Activated CD4-positive, alpha-beta T cell treated with anti-CD3 and anti-CD28 coated beads for 36 hours (primary cell): ENCODE measurements at regions of chr3 and their contacts with region 1.

Region 1: DNA sequence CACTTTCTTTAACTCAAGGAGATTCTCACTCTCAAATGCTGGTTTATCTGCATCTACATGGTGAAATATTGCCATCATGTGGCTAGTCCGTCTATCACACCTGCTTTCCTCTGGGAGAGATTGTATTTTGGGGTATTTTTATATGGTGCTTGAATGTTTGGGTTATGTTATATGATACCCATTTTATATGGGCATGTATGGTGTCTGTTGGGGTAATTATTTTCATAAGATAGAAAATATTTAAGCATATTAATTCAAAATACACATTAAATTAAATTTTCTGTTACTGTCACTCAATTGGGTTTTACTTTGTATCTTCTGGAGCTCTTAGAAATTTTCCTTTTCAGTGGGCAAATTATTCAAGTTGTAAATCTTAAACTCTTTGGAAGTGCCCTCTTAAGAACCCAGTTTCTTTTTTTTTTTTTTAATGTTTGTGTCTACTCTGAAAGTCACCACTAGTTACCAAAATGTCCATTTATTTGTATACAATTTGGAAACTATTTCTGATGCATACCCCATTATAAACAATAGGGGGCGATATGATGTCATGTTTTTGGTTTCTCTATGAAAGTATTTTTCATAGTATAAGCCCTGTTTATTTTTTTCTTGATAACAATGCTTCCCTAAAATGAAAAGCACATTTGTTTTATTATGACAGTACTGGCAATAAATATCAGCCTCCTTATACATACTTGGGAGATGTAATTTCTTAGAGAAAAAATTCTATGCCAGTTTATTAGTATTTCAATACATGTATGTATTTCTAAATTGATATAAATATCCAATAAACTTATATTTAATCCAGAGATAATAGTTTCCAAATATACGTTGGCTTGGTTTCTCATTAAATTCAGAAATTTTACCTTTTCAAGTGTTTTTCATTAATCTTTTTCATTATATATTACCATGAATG is 36.1 kb upstream of the PLSCR5 start:
- DNase-seq: peak; percentile 22
- ATAC-seq: peak; percentile 49
- H3K4me3 Mint-ChIP-seq: no peak overlapping the region
- H3K27ac Mint-ChIP-seq: no peak overlapping the region
- H3K4me1 Mint-ChIP-seq: no peaks in the 10 kb centered on the region
- H3K27me3 Mint-ChIP-seq: peaks cover 10% of the 10 kb centered on the region

Region 2: DNA sequence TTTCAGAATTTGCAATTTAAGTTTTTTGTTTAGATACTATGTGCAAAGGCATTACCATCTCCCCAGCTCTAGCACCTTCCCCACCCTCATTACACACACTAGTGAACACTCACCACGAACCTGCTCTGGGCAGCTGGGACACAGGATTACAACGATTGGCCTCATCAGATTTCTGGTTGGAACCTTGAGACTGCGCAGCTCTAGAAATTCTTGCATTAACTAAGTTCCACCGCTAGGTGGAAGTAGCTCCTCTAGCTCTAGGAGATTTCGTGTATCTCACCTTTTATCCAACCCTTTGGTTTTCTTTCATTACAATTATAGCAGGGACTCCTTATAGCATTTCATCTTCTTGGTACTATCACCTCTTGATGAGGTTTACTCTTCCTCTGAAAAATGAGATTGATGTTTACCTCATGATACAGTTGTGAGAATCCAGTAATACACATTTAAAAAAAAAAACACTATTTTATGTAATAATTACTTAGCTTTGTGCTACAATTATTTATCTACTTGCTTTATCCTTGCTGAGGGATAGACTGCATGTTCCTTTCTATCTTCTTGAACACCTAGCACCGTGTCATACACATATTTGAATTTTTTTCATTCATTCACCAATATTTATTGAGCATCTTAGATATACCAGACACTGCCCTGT is 451.6 kb before region 1 on chr3:
- CTCF ChIA-PET with region 1: no interaction called
- POLR2A ChIA-PET with region 1: no interaction called
- intact Hi-C with region 1: loop called in 1 of 2 experiments (anchors 1 kb)
- DNase-seq: no peak
- ATAC-seq: peak; percentile 76
- H3K4me3 Mint-ChIP-seq: no peak overlapping the region
- H3K27ac Mint-ChIP-seq: no peak overlapping the region
- H3K4me1 Mint-ChIP-seq: no peaks in the 10 kb centered on the region
- H3K27me3 Mint-ChIP-seq: peaks cover 10% of the 10 kb centered on the region

Region 3: DNA sequence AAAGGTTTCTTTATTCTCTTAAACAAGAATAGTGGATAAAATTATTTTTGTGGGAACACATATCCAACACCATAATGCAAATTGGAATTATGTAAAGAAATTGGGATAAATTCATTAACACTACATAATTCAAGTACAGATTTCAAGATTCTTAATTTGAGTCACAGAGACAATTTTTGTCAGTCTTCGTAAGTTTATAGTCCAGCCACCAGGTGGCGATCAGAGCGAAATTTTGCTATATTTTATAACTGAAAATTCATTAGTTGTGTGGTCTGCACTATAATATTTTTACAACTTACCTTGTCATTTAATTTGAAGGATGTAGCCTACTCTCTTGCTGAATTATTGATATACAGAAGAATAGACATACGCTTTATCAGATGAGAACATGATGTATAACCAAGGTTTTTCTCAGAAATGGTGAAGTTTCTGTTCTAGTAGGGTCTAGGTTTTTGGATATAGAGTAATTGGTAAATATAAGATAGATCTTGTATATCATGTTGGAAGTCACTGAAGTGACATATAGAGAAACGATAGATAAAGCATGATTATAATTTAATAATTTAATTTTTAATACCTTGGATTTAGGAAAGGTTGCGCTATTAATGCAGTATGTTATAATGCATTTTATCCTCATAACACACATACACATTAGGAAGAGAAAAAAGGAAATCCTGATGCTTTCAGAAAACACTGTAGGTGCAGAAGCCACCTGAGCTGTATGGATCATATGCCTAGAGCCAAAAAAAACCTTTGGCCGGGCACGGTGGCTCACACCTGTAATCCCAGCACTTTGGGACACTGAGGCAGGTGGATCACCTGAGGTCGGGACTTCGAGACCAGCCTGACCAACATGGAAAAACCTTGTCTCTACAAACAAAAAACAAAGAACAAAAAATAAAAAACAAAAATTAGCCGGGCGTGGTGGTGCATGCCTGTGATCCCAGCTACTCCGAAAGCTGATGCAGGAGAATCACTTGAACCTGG is 422.0 kb before region 1 on chr3:
- CTCF ChIA-PET with region 1: no interaction called
- POLR2A ChIA-PET with region 1: no interaction called
- intact Hi-C with region 1: loop called (anchors 1 kb)
- DNase-seq: peak; percentile 58
- ATAC-seq: no peak
- H3K4me3 Mint-ChIP-seq: no peak overlapping the region
- H3K27ac Mint-ChIP-seq: no peak overlapping the region
- H3K4me1 Mint-ChIP-seq: no peaks in the 10 kb centered on the region
- H3K27me3 Mint-ChIP-seq: peaks cover 8% of the 10 kb centered on the region

Region 4: DNA sequence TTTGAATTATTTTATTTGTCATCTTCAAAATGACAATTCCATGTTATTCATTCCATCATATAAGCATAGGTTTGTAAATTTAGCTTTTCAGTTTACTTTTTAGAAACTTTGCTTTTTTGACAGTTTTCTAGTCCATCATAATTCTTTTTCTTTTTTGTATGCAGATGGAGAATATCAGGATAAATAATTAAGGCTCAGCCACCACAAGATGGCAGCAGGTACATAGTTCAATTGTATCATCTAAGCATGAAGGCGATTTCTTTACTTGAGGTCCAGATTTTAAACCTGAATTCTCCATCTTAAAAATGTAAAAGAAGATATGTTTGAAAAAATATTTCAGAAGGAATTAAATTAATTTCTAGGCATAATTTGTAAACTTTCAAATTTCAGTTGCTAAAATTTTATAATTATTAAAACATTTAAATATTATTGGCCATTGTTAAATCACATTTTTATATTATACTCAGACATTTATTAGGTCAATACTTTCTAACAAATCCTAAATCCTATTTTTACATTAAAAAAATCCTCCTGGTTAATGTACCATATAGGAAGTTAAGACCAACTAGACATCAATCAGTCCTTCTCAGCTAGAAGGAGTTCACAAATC is 51.2 kb before region 1 on chr3:
- CTCF ChIA-PET with region 1: interaction called, 3 read pairs
- POLR2A ChIA-PET with region 1: no interaction called
- intact Hi-C with region 1: loop called (anchors 1 to 2 kb)
- DNase-seq: peak; percentile 35
- ATAC-seq: no peak
- H3K4me3 Mint-ChIP-seq: no peak overlapping the region
- H3K27ac Mint-ChIP-seq: no peak overlapping the region
- H3K4me1 Mint-ChIP-seq: no peaks in the 10 kb centered on the region
- H3K27me3 Mint-ChIP-seq: peaks cover 9% of the 10 kb centered on the region

Region 5: DNA sequence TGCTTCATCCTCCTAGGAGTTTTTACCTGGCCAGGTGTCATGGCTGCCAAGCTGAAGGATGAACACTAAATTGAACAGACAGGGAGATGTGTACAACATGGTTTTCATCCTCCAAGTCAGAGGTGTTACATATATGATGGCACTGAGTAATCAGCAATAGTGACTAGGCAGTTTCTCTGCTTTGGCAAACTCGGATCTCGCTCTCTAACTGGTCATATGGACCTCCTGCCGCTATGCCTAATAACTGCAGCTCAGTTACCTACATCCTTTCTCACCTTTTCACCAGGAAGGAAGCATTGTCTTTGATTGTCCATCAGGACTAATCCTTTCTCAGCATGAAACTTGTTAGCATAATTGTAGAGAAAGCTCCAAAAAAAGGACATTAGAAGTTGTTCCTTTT is 139.8 kb after region 1 on chr3:
- CTCF ChIA-PET with region 1: no interaction called
- POLR2A ChIA-PET with region 1: no interaction called
- intact Hi-C with region 1: no loop called
- DNase-seq: no peak
- ATAC-seq: no peak
- H3K4me3 Mint-ChIP-seq: no peak overlapping the region
- H3K27ac Mint-ChIP-seq: no peak overlapping the region
- H3K4me1 Mint-ChIP-seq: no peaks in the 10 kb centered on the region
- H3K27me3 Mint-ChIP-seq: no peaks in the 10 kb centered on the region

Region 6: DNA sequence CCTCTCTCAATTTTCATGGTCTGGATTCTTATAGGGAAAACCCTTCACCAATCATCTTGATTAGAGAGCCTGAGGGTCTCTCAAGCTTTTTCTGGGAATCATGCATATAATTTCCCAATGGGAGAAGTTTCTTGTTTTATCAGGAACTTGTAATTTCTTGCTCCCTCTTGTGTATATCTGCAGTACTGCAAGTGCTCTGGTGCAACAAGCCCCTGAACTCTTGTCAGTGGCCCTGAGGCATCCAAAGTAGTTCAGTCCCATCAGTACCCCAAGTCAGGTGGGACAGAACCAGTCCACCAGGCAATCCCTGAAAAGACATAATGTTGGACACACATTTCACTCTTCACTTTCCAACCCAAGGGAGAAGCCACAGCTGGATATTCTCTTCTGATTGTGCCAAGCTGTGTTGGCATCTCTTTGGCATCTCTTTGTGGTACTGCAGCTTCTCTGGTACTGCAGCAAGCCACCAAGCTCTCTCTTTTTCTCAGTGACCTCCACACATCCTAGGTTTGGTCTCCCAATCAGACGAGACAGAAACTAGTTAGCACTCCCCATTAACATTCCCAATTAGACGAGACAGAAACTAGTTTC is 550.7 kb after region 1 on chr3:
- CTCF ChIA-PET with region 1: no interaction called
- POLR2A ChIA-PET with region 1: no interaction called
- intact Hi-C with region 1: loop called (anchors 2 kb)
- DNase-seq: peak; percentile 7
- ATAC-seq: no peak
- H3K4me3 Mint-ChIP-seq: no peak overlapping the region
- H3K27ac Mint-ChIP-seq: no peak overlapping the region
- H3K4me1 Mint-ChIP-seq: no peaks in the 10 kb centered on the region
- H3K27me3 Mint-ChIP-seq: no peaks in the 10 kb centered on the region

Region 7: GRCh38 chr3:148075763-148076716 is 1434.8 kb after region 1 on chr3:
- CTCF ChIA-PET with region 1: no interaction called
- POLR2A ChIA-PET with region 1: no interaction called
- intact Hi-C with region 1: loop called in 1 of 2 experiments (anchors 10 kb)
- DNase-seq: no peak
- ATAC-seq: no peak
- H3K4me3 Mint-ChIP-seq: no peak overlapping the region
- H3K27ac Mint-ChIP-seq: no peak overlapping the region
- H3K4me1 Mint-ChIP-seq: no peaks in the 10 kb centered on the region
- H3K27me3 Mint-ChIP-seq: no peaks in the 10 kb centered on the region